Activated CD4-positive, alpha-beta memory T cell treated with anti-CD3 and anti-CD28 coated beads, Interleukin-2, amount 10 ng/mL, durations not matched to agents 7 days and 5 days (primary cell): ENCODE measurements at regions of chr11 and their contacts with region 1.

Region 1: GRCh38 chr11:134223836-134224709 is at the starts of genes NCAPD3 and VPS26B:
- DNase-seq: peak; percentile 97
- H3K4me3 Mint-ChIP-seq: peak within 1 kb of the TSS; percentile 95
- H3K27ac Mint-ChIP-seq: peak within 1 kb of the TSS; percentile 97
- H3K4me1 Mint-ChIP-seq: peaks cover 71% of the 10 kb centered on the region
- H3K27me3 Mint-ChIP-seq: no peaks in the 10 kb centered on the region
- total RNA-seq, gene NCAPD3: 94.4 to 97.2 TPM
- total RNA-seq, gene VPS26B: 60.4 to 63.9 TPM

Region 2: GRCh38 chr11:134196756-134197155 is 27.3 kb before region 1 on chr11:
- CTCF ChIA-PET with region 1: interaction called, 3 read pairs
- POLR2A ChIA-PET with region 1: interaction called, 14 read pairs
- DNase-seq: peak; percentile 46
- H3K4me3 Mint-ChIP-seq: peak overlapping the region; percentile 42
- H3K27ac Mint-ChIP-seq: peak overlapping the region; percentile 85
- H3K4me1 Mint-ChIP-seq: peaks cover 16% of the 10 kb centered on the region
- H3K27me3 Mint-ChIP-seq: no peaks in the 10 kb centered on the region

Region 3: GRCh38 chr11:134235399-134235798 is 11.3 kb after region 1 on chr11:
- CTCF ChIA-PET with region 1: interaction called, 5 read pairs
- POLR2A ChIA-PET with region 1: interaction called, 58 read pairs
- DNase-seq: no peak
- H3K4me3 Mint-ChIP-seq: no peak overlapping the region
- H3K27ac Mint-ChIP-seq: no peak overlapping the region
- H3K4me1 Mint-ChIP-seq: peaks cover 25% of the 10 kb centered on the region
- H3K27me3 Mint-ChIP-seq: no peaks in the 10 kb centered on the region

Region 4: GRCh38 chr11:134253188-134253993 is 29.3 kb after region 1 on chr11 and contains the starts of genes ACAD8 and THYN1:
- CTCF ChIA-PET with region 1: interaction called, 16 read pairs
- POLR2A ChIA-PET with region 1: interaction called, 116 read pairs
- DNase-seq: peak; percentile 97
- H3K4me3 Mint-ChIP-seq: peak within 1 kb of the TSS; percentile 88
- H3K27ac Mint-ChIP-seq: peak within 1 kb of the TSS; percentile 64
- H3K4me1 Mint-ChIP-seq: peaks cover 44% of the 10 kb centered on the region
- H3K27me3 Mint-ChIP-seq: no peaks in the 10 kb centered on the region
- total RNA-seq, gene ACAD8: 21.8 to 23.3 TPM
- total RNA-seq, gene THYN1: 61.5 to 67.0 TPM

Region 5: DNA sequence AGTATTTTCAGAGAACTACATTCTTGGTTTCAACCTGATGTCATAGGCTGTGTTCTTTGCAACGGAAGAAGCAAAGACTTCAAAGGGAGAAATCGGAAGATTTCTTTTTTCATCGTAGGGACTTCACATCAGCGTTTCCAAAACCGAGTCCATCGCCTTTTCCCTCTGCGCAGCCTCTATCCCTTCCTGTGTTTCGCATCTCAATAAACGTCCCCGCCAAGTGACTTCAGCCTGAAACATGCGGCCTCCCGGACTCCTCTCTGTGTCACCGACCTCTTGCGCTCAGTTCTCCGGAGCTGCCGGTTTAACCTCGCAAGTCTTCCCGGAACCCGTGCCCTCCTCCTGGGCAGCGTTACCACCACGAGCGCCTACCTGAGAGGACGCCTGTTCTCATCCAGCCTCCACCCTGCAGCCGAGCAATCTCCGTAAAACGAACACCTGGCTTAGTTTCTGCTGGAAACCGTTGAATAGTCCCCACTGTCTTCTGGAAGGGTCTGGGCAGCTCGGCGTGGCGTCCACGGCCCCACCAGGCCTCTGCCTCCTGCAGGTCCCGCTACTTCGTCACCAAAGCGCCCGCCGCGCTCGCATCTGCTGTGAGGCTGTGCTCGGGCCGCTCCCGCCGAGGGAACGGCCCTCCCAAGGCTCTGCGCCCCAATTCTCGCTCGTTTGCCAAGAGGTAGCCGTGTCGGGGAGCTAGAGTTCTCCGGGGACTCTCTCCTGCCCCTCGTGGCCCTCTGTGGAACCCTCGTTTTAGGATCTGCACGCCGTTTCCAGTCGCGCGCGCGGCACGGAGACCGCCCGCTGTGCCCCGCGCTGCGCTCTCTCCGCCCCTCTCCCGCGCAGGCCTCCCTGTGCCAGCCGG is 51.7 kb after region 1 on chr11 and contains the start of gene GLB1L3:
- CTCF ChIA-PET with region 1: interaction called, 31 read pairs
- POLR2A ChIA-PET with region 1: interaction called, 51 read pairs
- DNase-seq: peak; percentile 88
- H3K4me3 Mint-ChIP-seq: peak within 1 kb of the TSS; percentile 92
- H3K27ac Mint-ChIP-seq: peak within 1 kb of the TSS; percentile 91
- H3K4me1 Mint-ChIP-seq: peaks cover 59% of the 10 kb centered on the region
- H3K27me3 Mint-ChIP-seq: peaks cover 4% of the 10 kb centered on the region
- total RNA-seq, gene GLB1L3: 6.9 TPM

Region 6: DNA sequence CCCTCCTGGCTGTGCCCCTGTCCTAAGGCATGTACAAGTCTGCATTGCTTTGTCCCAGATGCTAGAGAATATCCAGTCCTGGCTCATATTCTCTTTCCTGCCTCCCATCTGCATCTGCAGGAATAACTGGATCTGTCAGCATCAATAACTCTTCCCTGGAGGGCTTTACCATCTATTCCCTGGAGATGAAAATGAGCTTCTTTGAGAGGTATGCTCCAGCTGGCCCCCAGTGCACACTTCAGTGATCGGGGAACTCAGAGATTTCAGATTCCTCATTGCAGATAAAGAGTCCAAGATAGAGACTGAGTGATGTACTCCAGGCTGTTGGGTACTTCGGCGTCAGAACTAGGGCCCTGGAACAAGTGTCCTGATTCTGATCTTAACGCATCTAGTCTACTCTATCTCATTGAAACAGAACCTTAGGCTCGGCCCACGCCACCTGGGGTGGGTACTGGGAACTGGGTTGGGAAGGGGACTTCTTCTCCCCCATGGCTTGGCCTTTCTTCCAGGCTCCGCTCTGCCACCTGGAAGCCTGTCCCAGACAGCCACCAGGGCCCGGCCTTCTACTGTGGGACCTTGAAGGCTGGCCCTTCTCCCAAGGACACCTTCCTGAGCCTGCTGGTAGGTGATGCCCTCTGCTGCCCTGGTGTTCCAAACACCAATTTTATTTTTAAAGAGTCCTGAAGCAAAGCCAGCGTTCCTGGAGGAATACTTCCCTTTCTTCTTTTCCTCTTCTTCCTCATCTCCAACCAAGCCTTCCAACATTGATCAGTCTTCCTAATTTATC is 89.9 kb after region 1 on chr11:
- CTCF ChIA-PET with region 1: no interaction called
- POLR2A ChIA-PET with region 1: no interaction called
- DNase-seq: no peak
- H3K4me3 Mint-ChIP-seq: no peak overlapping the region
- H3K27ac Mint-ChIP-seq: no peak overlapping the region
- H3K4me1 Mint-ChIP-seq: no peaks in the 10 kb centered on the region
- H3K27me3 Mint-ChIP-seq: no peaks in the 10 kb centered on the region

Region 7: DNA sequence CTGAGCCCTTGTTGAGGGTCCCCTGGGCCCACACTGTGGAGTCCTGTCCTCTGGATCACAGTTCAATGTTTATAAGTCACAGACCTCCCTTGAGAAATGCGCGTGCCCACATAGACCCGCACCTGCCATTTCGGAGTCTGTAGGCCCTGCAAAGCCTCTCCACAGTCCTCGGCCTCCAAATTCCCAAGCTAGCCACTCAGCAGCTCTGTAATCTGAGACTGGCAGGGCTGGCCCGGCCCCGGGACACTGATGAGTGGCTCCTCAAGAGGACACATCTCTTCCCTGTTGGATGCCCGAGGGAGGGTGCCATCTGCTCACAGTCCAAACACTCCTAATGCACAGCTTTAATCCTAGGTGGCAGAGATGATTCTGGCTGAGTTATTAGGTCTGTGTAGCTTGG is 148.9 kb after region 1 on chr11:
- CTCF ChIA-PET with region 1: no interaction called
- POLR2A ChIA-PET with region 1: no interaction called
- DNase-seq: no peak
- H3K4me3 Mint-ChIP-seq: no peak overlapping the region
- H3K27ac Mint-ChIP-seq: no peak overlapping the region
- H3K4me1 Mint-ChIP-seq: no peaks in the 10 kb centered on the region
- H3K27me3 Mint-ChIP-seq: no peaks in the 10 kb centered on the region